AG04449 (cell line): ENCODE measurements at regions of chr2 and their contacts with region 1.

Region 1: DNA sequence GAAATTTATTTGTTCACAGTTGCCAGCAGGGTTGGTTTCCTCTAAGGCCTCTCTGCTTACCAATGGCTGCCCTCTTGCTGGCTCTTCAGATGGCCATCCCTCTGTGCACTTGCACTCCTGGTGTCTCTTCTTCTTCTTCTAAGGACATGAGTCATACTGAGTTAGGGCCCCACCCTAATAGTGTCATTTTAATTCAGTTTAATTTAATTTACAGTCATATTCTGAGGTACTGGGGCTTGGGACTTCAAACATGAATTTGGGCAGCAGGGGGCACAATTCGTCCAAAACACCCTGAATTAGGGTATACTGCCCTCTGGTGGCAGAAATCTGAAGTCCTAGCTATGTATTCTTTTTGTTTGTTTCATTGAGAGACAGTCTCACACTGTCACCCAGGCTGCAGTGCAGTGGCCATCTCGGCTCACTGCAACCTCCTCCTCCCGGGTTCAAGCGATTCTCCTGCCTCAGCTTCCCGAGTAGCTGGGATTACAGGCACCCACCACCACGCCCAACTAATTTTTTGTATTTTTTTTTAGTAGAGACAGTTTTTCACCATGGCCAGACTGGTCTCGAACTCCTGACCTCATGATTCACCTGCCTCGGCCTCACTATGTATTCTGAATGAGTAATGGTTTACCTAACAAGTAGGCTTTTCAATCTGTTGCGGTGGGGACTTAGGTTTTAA is 19.8 kb downstream of the SLC4A1AP start:
- DNase-seq: peak; percentile 36
- H3K4me3 ChIP-seq: no peak overlapping the region
- CTCF ChIP-seq: peak; percentile 71

Region 2: GRCh38 chr2:27380626-27381545 is 302.6 kb before region 1 on chr2 and contains the start of gene ZNF513:
- CTCF ChIA-PET with region 1: interaction called, 15 read pairs
- POLR2A ChIA-PET with region 1: no interaction called
- DNase-seq: peak; percentile 55
- H3K4me3 ChIP-seq: peak within 1 kb of the TSS; percentile 88
- CTCF ChIP-seq: no peak

Region 3: DNA sequence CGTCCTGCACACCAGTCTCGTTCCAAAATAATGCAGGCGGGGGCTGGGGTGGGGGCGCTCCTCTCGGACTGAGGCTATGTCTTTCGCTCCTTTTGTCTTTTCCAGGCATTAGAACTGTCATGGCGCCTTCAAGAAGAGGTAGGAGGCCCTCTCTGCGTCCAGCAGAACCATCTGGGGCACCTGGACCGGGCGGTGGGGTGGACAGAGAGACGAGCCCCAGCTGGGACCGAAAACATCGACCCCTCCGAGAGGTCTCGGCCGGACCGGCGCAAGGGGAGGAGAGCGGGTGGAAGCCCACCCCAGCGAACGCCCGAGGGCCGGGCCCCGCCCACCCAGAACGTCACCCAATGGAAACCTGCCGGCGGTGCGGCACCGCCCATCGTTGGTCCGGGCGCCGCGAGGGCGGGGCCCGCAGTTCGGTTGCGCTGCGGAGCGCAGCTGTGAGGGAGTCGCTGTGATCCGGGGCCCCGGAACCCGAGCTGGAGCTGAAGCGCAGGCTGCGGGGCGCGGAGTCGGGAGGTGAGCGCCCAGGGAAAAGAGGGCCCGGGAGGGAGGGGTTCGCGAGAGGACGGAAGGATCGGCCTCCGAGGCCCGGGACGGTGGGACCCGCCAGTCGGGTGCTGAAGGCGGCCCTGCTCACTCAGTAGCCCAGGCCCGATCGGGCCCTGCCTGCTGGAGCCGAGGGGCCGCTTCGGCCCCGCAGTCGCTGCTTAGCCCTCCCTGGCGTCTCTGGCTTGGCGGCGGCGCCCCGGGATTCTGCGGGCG is 255.1 kb before region 1 on chr2 and contains the start of gene NRBP1:
- CTCF ChIA-PET with region 1: interaction called, 25 read pairs
- POLR2A ChIA-PET with region 1: no interaction called
- DNase-seq: peak; percentile 29
- H3K4me3 ChIP-seq: peak within 1 kb of the TSS; percentile 82
- CTCF ChIP-seq: no peak

Region 4: DNA sequence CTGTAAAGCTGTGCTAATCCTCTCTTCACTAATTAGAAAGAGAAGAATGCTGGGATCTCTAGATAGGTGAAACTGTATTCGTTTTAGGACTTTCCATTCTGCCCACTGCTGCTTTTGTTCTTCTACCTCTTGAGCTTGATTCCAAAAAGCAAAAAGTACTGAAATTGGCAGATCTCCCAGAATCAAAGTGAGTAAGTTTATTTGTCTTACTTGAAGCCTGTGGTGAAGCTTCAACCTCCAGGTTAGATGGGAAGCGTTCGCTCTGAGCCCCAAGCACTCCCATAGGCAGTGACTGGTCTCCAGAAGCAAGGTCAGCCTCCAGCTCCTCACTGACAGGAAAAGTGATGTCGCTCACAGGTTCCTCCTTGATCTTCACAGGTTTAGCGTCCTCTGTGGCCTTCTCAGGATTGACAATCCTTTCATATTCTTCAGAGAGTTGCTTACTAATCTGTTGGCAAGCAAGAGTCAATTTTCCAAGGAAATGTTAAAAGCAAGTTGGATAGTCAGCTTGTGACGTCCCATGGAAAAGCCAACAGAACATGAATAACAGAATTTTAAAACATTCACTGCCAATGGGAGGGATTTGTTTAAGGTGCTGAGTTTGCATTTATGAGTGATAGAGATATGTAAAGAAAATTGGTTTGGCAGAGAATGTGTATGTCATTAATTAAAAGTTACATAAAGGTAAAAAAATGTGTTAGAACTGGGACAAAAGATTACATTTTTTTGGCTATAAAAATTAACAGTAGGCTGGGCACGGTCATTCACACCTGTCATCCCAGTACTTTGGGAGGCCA is 28.2 kb before region 1 on chr2:
- CTCF ChIA-PET with region 1: interaction called, 13 read pairs
- POLR2A ChIA-PET with region 1: no interaction called
- DNase-seq: no peak
- H3K4me3 ChIP-seq: no peak overlapping the region
- CTCF ChIP-seq: no peak

Region 5: GRCh38 chr2:27697660-27698059 is 14.1 kb after region 1 on chr2:
- CTCF ChIA-PET with region 1: interaction called, 48 read pairs
- POLR2A ChIA-PET with region 1: no interaction called
- DNase-seq: no peak
- H3K4me3 ChIP-seq: no peak overlapping the region
- CTCF ChIP-seq: no peak

Region 6: GRCh38 chr2:28117104-28117596 is 433.6 kb after region 1 on chr2:
- CTCF ChIA-PET with region 1: no interaction called
- POLR2A ChIA-PET with region 1: no interaction called
- DNase-seq: no peak
- H3K4me3 ChIP-seq: no peak overlapping the region
- CTCF ChIP-seq: no peak

Region 7: GRCh38 chr2:28403370-28403956 is 719.9 kb after region 1 on chr2:
- CTCF ChIA-PET with region 1: interaction called, 21 read pairs
- POLR2A ChIA-PET with region 1: no interaction called
- DNase-seq: no peak
- H3K4me3 ChIP-seq: no peak overlapping the region
- CTCF ChIP-seq: no peak